Activated CD8-positive, alpha-beta T cell treated with anti-CD3 and anti-CD28 coated beads for 36 hours (primary cell): ENCODE measurements at regions of chr14 and their contacts with region 1.

Region 1: GRCh38 chr14:99320105-99320572 is 48.1 kb upstream of the BCL11B start:
- DNase-seq: peak; percentile 89
- ATAC-seq: peak; percentile 90
- H3K4me3 Mint-ChIP-seq: peak overlapping the region; percentile 35
- H3K27ac Mint-ChIP-seq: no peak overlapping the region
- H3K4me1 Mint-ChIP-seq: peaks cover 9% of the 10 kb centered on the region
- H3K27me3 Mint-ChIP-seq: no peaks in the 10 kb centered on the region
- CTCF ChIP-seq: peak; percentile 91

Region 2: DNA sequence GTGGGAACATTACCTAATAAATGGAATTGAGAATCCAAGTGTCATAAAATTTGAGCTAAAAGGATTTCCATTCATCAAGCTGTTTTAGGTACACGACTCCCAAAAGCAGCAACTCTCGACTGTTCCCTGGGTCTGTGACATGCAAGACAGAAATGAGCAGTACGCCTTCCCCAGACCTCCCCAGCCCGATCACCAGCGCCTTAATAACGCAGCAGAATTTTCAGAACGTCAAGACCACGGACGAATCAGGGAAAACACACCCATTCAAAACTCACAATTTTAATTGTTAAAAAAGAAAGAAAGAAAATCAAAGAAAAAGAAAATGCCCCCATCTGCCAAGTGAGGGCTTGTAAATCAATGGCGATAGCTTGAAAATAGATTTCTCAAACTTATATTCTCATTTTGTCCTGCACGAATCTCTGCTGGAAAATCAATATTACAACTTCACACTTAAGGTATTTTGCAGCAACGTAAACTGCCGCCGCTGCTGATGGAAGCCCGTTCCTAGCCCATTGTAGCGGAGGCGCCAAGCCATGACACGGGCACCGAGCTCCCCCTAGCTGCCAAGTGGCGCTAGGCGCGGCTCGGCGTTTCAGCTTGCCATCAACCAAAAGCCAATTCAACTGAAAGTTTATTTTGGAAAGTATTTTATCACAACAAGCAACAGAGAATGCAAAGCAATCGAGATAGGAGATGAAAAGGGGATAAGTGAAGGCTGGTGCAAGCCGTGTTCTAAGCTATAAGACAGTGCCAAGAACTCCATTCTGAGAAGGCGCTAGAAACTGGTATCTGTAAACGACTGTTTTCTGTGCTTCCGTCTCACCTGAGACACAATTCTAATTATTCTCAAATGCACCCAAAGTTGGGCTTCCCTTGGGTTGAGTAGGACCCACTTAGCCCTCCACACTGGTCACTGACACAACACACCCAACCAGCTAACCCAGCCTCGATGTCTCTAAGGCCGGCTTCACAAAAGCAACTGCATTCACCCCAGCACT is 53.7 kb before region 1 on chr14:
- CTCF ChIA-PET with region 1: no interaction called
- POLR2A ChIA-PET with region 1: no interaction called
- intact Hi-C with region 1: no loop called
- DNase-seq: peak; percentile 93
- ATAC-seq: peak; percentile 38
- H3K4me3 Mint-ChIP-seq: peak overlapping the region; percentile 86
- H3K27ac Mint-ChIP-seq: peak overlapping the region; percentile 98
- H3K4me1 Mint-ChIP-seq: peaks cover 42% of the 10 kb centered on the region
- H3K27me3 Mint-ChIP-seq: no peaks in the 10 kb centered on the region
- CTCF ChIP-seq: peak; percentile 97

Region 3: DNA sequence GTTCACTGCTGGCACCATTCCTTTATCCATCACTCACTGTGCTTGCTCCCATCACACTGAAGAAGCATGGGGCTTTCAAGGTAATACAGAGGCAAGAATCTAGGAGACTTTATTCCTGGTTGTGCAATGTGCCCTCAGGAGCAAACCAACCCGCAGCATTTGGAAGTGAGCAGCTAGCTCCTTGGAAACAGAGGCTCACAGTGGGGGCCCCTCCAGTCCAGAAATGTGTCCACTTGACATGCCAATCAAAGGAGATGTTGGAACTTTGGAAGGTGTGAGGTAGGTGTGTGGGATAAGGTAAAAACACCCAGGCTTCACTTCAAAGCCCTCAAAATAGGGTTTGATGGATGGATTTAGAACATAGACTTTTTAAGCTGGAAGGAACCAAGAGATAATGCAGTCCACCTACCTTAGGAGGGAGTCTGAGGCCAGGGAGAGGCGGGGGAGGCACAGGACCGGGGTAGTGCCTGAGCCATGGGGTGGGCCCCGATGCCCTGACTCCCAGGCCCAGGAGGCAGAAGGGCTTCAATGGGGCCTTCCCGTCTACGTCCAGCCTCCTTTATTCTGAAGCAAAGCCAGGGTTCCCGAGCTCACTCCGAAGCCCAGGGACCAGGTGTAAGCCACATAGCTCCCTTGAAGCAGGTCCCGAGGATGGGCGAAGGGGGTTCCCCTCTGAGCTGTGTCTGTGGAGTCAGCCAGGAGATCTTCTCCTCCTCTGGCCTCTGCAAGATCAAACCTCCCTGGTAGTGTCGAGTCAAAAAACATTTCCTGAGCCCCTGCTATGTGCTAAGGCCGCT is 30.5 kb before region 1 on chr14:
- CTCF ChIA-PET with region 1: interaction called, 10 read pairs
- POLR2A ChIA-PET with region 1: no interaction called
- intact Hi-C with region 1: no loop called
- DNase-seq: no peak
- ATAC-seq: no peak
- H3K4me3 Mint-ChIP-seq: no peak overlapping the region
- H3K27ac Mint-ChIP-seq: no peak overlapping the region
- H3K4me1 Mint-ChIP-seq: peaks cover 13% of the 10 kb centered on the region
- H3K27me3 Mint-ChIP-seq: no peaks in the 10 kb centered on the region
- CTCF ChIP-seq: no peak

Region 4: GRCh38 chr14:99304209-99304608 is 15.9 kb before region 1 on chr14:
- CTCF ChIA-PET with region 1: interaction called, 14 read pairs
- POLR2A ChIA-PET with region 1: no interaction called
- intact Hi-C with region 1: no loop called
- DNase-seq: no peak
- ATAC-seq: no peak
- H3K4me3 Mint-ChIP-seq: no peak overlapping the region
- H3K27ac Mint-ChIP-seq: no peak overlapping the region
- H3K4me1 Mint-ChIP-seq: no peaks in the 10 kb centered on the region
- H3K27me3 Mint-ChIP-seq: no peaks in the 10 kb centered on the region
- CTCF ChIP-seq: no peak

Region 5: GRCh38 chr14:99333841-99334635 is 13.9 kb after region 1 on chr14:
- CTCF ChIA-PET with region 1: interaction called, 10 read pairs
- POLR2A ChIA-PET with region 1: no interaction called
- intact Hi-C with region 1: no loop called
- DNase-seq: no peak
- ATAC-seq: no peak
- H3K4me3 Mint-ChIP-seq: no peak overlapping the region
- H3K27ac Mint-ChIP-seq: no peak overlapping the region
- H3K4me1 Mint-ChIP-seq: no peaks in the 10 kb centered on the region
- H3K27me3 Mint-ChIP-seq: peaks cover 1% of the 10 kb centered on the region
- CTCF ChIP-seq: no peak

Region 6: DNA sequence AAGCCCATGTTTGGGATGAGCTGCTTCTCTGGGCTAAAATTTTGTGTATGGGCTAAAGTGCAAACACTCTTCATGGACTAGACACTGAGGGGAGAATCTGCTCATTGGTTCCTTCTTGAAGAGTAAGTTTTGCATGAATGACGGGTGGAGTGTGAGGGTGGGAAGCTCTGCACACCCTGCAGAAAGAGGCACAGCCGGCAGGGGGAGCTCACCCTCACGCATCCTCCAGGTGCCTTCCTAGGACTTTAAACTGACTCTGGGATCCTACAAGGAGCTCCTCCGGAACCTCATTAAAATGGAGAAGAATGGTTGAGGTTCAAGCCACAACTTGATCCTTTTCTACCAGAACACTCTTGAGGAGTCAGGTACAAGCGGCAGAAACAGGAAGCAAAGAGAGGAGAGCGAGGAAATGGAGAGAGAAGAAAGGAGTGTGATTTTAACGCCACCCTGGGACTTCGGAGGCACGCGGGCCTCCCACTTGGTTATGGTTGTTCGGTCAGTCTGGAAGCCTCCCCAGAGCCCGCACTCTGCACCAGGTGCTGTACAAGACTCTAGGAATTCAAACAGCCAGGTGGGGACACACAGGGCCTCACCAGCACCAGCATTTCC is 73.0 kb after region 1 on chr14:
- CTCF ChIA-PET with region 1: interaction called, 14 read pairs
- POLR2A ChIA-PET with region 1: no interaction called
- intact Hi-C with region 1: no loop called
- DNase-seq: peak; percentile 46
- ATAC-seq: peak; percentile 60
- H3K4me3 Mint-ChIP-seq: no peak overlapping the region
- H3K27ac Mint-ChIP-seq: no peak overlapping the region
- H3K4me1 Mint-ChIP-seq: peaks cover 11% of the 10 kb centered on the region
- H3K27me3 Mint-ChIP-seq: no peaks in the 10 kb centered on the region
- CTCF ChIP-seq: peak; percentile 75

Region 7: GRCh38 chr14:99415496-99416281 is 95.5 kb after region 1 on chr14:
- CTCF ChIA-PET with region 1: interaction called, 33 read pairs
- POLR2A ChIA-PET with region 1: no interaction called
- intact Hi-C with region 1: loop called (anchors 10 kb)
- DNase-seq: peak; percentile 71
- ATAC-seq: peak; percentile 98
- H3K4me3 Mint-ChIP-seq: no peak overlapping the region
- H3K27ac Mint-ChIP-seq: no peak overlapping the region
- H3K4me1 Mint-ChIP-seq: peaks cover 24% of the 10 kb centered on the region
- H3K27me3 Mint-ChIP-seq: no peaks in the 10 kb centered on the region
- CTCF ChIP-seq: peak; percentile 84